Activated naive CD4-positive, alpha-beta T cell treated with anti-CD3 and anti-CD28 coated beads for 36 hours (primary cell): ENCODE measurements at regions of chr11 and their contacts with region 1.

Region 1: DNA sequence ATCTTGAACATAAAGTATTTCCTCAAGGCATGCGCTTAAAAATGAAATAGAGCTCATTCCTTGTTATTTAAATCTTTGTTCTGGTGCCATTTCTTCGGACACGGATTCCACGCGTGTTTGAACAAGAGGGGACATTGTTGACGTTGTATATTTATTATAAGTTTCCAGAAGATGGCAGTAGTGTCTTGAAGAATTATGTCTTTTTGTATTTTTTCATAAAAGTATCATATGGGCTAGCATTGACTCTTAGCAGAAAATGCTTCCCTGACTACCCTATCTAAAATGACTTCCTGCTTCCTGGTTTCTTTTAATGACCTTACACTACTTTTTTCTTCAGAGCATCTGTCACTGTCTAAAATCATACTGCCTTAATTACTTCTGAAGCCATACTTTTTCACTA is 20.4 kb downstream of the BIRC2 start:
- DNase-seq: no peak
- H3K4me3 Mint-ChIP-seq: no peak overlapping the region
- H3K27ac Mint-ChIP-seq: peak overlapping the region; percentile 1
- H3K4me1 Mint-ChIP-seq: peaks cover 34% of the 10 kb centered on the region
- H3K27me3 Mint-ChIP-seq: no peaks in the 10 kb centered on the region

Region 2: GRCh38 chr11:102430158-102430836 is 62.9 kb after region 1 on chr11:
- CTCF ChIA-PET with region 1: interaction called, 4 read pairs
- intact Hi-C with region 1: loop called (anchors 1 kb)
- DNase-seq: peak; percentile 86
- H3K4me3 Mint-ChIP-seq: peak overlapping the region; percentile 44
- H3K27ac Mint-ChIP-seq: peak overlapping the region; percentile 95
- H3K4me1 Mint-ChIP-seq: peaks cover 75% of the 10 kb centered on the region
- H3K27me3 Mint-ChIP-seq: no peaks in the 10 kb centered on the region

Region 3: GRCh38 chr11:102653744-102654291 is 286.5 kb after region 1 on chr11:
- CTCF ChIA-PET with region 1: no interaction called
- intact Hi-C with region 1: no loop called
- DNase-seq: no peak
- H3K4me3 Mint-ChIP-seq: no peak overlapping the region
- H3K27ac Mint-ChIP-seq: no peak overlapping the region
- H3K4me1 Mint-ChIP-seq: no peaks in the 10 kb centered on the region
- H3K27me3 Mint-ChIP-seq: peaks cover 8% of the 10 kb centered on the region